ENCODE measurements at regions of chr19 and their contacts with region 1.

Region 1: DNA sequence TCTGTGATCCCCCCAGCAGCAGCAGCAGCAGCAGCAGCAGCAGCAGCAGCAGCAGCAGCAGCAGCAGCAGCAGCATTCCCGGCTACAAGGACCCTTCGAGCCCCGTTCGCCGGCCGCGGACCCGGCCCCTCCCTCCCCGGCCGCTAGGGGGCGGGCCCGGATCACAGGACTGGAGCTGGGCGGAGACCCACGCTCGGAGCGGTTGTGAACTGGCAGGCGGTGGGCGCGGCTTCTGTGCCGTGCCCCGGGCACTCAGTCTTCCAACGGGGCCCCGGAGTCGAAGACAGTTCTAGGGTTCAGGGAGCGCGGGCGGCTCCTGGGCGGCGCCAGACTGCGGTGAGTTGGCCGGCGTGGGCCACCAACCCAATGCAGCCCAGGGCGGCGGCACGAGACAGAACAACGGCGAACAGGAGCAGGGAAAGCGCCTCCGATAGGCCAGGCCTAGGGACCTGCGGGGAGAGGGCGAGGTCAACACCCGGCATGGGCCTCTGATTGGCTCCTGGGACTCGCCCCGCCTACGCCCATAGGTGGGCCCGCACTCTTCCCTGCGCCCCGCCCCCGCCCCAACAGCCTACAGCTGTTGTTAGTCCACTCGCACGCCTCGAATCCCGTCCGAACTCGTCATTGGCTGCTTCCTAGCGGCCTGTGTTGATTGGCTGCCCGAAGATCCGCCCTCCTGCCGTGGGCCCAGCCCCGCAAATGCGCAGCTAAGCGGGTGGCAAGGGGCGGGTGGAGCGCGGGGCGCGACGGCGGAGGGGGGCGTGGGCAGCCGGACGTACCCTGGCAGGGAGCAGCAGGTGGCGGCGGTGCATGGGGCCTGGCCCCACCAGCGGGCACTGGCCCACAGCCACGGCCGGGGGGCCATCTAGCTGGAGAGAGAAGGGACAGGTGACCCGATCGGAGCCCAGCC is 1.4 kb upstream of the SIX5 start:
- DNase-seq: peak; percentile 93
- ATAC-seq: peak; percentile 68
- H3K4me3 Mint-ChIP-seq: peak overlapping the region; percentile 78
- H3K27ac Mint-ChIP-seq: no peak overlapping the region
- H3K4me1 Mint-ChIP-seq: peaks cover 10% of the 10 kb centered on the region
- H3K27me3 Mint-ChIP-seq: peaks cover 10% of the 10 kb centered on the region

Region 2: GRCh38 chr19:45681391-45682015 is 88.9 kb before region 1 on chr19:
- CTCF ChIA-PET with region 1: no interaction called
- POLR2A ChIA-PET with region 1: no interaction called
- intact Hi-C with region 1: no loop called
- DNase-seq: peak; percentile 92
- ATAC-seq: peak; percentile 84
- H3K4me3 Mint-ChIP-seq: peak overlapping the region; percentile 64
- H3K27ac Mint-ChIP-seq: peak overlapping the region; percentile 77
- H3K4me1 Mint-ChIP-seq: peaks cover 19% of the 10 kb centered on the region
- H3K27me3 Mint-ChIP-seq: no peaks in the 10 kb centered on the region

Region 3: DNA sequence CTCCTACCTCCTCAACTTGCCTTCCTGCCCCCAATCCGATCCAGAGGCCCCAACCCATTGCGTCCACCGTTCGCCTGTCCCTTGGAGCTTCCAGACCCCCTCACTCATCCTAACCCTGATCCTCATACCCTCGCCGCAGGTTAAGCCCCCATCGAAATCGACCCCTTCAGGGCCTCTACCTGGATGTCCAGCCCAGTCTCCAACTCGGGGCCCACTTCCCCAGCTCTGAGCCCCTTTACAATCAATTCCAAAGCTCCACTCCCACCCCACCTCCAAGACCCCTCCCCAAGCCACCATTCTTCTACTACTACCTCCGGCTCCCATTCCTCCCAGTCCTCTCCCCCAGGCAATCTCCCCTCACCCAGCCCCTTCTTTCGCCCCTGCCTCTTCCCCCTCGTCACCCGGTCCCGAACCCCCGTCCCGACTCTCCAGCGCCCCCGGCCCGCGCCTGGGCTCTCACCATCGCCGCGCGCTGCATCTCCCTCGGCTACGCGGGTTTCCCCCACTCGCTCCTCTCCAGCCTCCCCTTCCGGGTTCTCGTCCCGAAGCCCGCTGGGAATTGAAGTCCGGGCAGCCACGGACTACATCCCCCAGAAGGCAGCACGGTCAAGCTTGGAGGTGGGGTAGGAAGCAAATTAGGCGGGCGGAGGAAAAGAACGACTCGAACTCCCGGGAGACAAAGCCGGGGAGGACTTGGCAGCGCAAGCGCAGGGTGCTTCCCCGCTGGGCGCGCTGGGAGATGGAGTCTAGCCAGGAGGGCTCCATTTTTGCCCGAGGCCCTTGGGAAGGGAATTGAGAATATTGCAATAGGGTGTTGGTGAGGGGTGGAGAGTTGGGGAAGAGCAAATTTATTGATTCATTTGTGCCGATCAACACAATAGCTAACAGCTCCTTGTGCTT is 39.8 kb before region 1 on chr19 and contains the start of gene FBXO46:
- CTCF ChIA-PET with region 1: interaction called, 8 read pairs
- POLR2A ChIA-PET with region 1: interaction called, 5 read pairs
- intact Hi-C with region 1: loop called in 1 of 2 experiments (anchors 1 kb)
- DNase-seq: peak; percentile 97
- ATAC-seq: peak; percentile 99
- H3K4me3 Mint-ChIP-seq: peak within 1 kb of the TSS; percentile 88
- H3K27ac Mint-ChIP-seq: peak within 1 kb of the TSS; percentile 90
- H3K4me1 Mint-ChIP-seq: peaks cover 35% of the 10 kb centered on the region
- H3K27me3 Mint-ChIP-seq: no peaks in the 10 kb centered on the region
- total RNA-seq, gene FBXO46: 32.3 to 43.3 TPM

Region 4: GRCh38 chr19:45798995-45799517 is 28.6 kb after region 1 on chr19:
- CTCF ChIA-PET with region 1: interaction called, 126 read pairs
- POLR2A ChIA-PET with region 1: interaction called, 6 read pairs
- intact Hi-C with region 1: loop called (anchors 1 kb)
- DNase-seq: peak; percentile 76
- ATAC-seq: peak; percentile 92
- H3K4me3 Mint-ChIP-seq: no peak overlapping the region
- H3K27ac Mint-ChIP-seq: no peak overlapping the region
- H3K4me1 Mint-ChIP-seq: peaks cover 5% of the 10 kb centered on the region
- H3K27me3 Mint-ChIP-seq: peaks cover 26% of the 10 kb centered on the region

Region 5: DNA sequence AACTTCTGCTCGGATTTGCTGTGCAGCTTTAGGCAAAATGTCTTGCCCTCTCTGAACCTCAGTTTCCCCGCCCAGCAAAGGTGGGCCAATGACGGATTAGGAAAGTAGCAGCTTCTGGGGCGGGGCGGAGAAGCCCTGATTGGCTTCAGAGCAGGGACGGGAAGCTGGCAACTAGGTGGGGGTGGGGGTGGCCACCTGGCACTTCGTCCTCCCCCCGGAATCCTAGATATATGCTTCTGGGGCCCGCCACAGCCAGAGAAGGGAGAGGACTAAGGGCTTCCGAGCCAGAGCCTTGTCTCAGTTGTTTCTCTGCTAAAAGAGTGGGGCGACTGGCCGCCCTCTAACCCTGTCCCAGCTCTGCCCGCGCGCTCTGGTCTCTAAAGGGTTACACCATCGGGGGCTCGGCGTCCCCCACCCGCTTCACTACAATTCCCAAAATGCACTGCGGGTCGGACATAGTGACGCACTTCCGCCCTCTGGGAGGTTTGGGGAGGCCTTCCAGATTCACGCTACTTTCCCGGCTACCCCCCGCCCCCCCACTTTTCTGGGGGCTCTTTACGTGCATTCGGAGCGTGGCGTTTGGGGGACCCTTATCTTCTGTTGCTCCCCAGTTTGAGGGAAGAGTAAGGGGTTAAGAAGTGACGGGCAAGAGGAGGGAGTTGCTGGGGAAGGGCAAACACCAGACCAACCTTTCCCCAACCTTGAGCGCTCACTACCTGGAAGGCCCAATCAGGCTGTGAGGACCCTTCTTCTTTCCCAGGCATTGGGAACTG is 116.2 kb after region 1 on chr19:
- CTCF ChIA-PET with region 1: interaction called, 7 read pairs
- POLR2A ChIA-PET with region 1: no interaction called
- intact Hi-C with region 1: loop called (anchors 1 kb)
- DNase-seq: peak; percentile 96
- ATAC-seq: peak; percentile 85
- H3K4me3 Mint-ChIP-seq: peak overlapping the region; percentile 85
- H3K27ac Mint-ChIP-seq: peak overlapping the region; percentile 95
- H3K4me1 Mint-ChIP-seq: peaks cover 17% of the 10 kb centered on the region
- H3K27me3 Mint-ChIP-seq: no peaks in the 10 kb centered on the region

Region 6: GRCh38 chr19:45927565-45928261 is 157.3 kb after region 1 on chr19:
- CTCF ChIA-PET with region 1: interaction called, 3 read pairs
- POLR2A ChIA-PET with region 1: no interaction called
- intact Hi-C with region 1: loop called in 1 of 2 experiments (anchors 1 kb)
- DNase-seq: peak; percentile 96
- ATAC-seq: peak; percentile 100
- H3K4me3 Mint-ChIP-seq: peak overlapping the region; percentile 56
- H3K27ac Mint-ChIP-seq: peak overlapping the region; percentile 68
- H3K4me1 Mint-ChIP-seq: peaks cover 12% of the 10 kb centered on the region
- H3K27me3 Mint-ChIP-seq: peaks cover 7% of the 10 kb centered on the region

Region 7: DNA sequence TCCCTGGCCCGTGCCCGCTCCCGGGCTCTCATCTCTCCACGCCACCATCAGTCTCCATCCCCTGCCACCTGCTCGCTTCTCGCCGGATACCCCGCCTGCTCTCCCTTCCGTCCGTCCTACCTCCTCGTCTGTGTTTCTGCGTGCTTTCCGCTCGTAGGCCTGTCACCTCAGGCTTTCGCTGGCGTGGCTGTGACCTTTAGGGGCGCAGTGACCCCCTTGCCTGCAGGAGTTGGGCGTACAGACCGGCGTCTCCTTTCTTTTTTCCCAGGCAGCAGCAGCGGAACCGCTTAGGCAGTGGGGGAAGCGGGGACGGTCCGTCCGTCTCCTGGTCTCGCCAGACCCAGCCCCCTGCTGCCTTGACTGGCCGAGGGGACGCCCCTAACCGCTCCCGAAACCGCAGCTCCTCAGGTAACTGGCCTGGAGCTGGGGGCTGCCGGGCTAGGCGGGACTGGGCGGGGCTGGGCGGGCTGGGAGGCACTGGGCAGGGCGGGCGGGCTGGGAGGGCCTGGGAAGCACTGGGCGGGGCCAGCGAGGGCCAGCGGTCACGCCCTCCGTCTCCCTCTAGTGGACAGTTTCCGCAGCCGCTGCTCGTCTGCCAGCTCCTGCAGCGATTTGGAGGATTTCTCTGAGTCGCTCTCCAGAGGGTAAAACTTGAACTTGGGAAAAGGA is 246.1 kb after region 1 on chr19:
- CTCF ChIA-PET with region 1: no interaction called
- POLR2A ChIA-PET with region 1: no interaction called
- intact Hi-C with region 1: loop called in 1 of 2 experiments (anchors 1 kb)
- DNase-seq: peak; percentile 90
- ATAC-seq: peak; percentile 73
- H3K4me3 Mint-ChIP-seq: peak overlapping the region; percentile 66
- H3K27ac Mint-ChIP-seq: no peak overlapping the region
- H3K4me1 Mint-ChIP-seq: peaks cover 16% of the 10 kb centered on the region
- H3K27me3 Mint-ChIP-seq: peaks cover 14% of the 10 kb centered on the region